ENCODE measurements at regions of chr2 and their contacts with region 1.

Region 1: GRCh38 chr2:102251042-102251848 is 60.1 kb upstream of the IL1RL1 start:
- DNase-seq: no peak
- H3K4me3 Mint-ChIP-seq: no peak overlapping the region
- H3K27ac Mint-ChIP-seq: no peak overlapping the region
- H3K4me1 Mint-ChIP-seq: peaks cover 16% of the 10 kb centered on the region
- H3K27me3 Mint-ChIP-seq: no peaks in the 10 kb centered on the region
- CTCF ChIP-seq: no peak

Region 2: GRCh38 chr2:102114290-102114721 is 136.9 kb before region 1 on chr2:
- CTCF ChIA-PET with region 1: no interaction called
- POLR2A ChIA-PET with region 1: no interaction called
- intact Hi-C with region 1: no loop called
- DNase-seq: no peak
- H3K4me3 Mint-ChIP-seq: no peak overlapping the region
- H3K27ac Mint-ChIP-seq: no peak overlapping the region
- H3K4me1 Mint-ChIP-seq: no peaks in the 10 kb centered on the region
- H3K27me3 Mint-ChIP-seq: no peaks in the 10 kb centered on the region
- CTCF ChIP-seq: no peak

Region 3: DNA sequence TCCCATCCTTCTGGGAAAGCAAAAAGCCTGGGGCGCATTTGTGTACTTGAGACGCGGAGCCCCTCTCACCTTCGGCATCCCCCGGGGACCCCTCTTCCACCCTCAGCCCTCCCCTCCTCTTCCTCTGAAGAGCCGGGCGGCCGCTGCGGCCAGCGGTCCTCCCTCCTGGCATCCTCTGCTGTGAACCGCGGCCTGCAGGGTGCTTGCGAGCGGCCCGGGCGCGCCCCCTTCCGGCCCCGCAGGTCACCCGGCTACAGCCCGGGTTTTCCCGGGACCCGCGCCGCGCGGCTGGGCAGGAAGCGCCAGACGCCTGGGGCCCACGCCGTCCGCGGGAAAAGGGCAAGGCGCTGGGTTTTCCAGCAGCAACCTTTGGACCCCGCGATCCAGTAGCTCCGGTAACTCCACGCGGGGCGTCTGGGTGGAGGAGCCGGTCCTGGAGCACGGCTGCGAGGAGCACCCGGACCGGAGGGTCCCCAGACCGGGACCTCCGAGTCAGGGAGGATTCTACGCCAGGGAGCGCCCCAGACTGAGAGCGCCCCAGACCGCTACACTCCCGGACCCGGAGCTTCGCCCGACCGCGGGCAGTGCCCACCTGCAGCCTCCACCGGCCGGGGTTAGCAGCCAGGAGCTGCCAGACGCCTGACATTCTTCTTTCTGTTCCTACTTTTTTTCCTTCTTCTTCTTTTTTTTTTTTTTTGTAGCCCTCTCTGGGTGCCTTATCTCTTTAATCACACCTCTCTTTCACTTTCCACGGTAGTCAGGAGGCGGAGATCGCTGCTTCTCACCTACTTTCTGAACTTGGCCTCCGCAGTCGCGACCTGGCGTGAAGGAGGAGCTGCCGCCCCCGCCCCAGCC is 104.5 kb after region 1 on chr2 and contains the start of gene IL18R1:
- CTCF ChIA-PET with region 1: interaction called, 12 read pairs
- POLR2A ChIA-PET with region 1: no interaction called
- intact Hi-C with region 1: loop called (anchors 1 kb)
- DNase-seq: peak; percentile 71
- H3K4me3 Mint-ChIP-seq: peak within 1 kb of the TSS; percentile 87
- H3K27ac Mint-ChIP-seq: peak within 1 kb of the TSS; percentile 68
- H3K4me1 Mint-ChIP-seq: peaks cover 19% of the 10 kb centered on the region
- H3K27me3 Mint-ChIP-seq: no peaks in the 10 kb centered on the region
- CTCF ChIP-seq: peak; percentile 85
- total RNA-seq, gene IL18R1: 3.5 and 6.7 TPM in 2 replicates